H1 (cell line): ENCODE measurements at regions of chr1 and their contacts with region 1.

Region 1: DNA sequence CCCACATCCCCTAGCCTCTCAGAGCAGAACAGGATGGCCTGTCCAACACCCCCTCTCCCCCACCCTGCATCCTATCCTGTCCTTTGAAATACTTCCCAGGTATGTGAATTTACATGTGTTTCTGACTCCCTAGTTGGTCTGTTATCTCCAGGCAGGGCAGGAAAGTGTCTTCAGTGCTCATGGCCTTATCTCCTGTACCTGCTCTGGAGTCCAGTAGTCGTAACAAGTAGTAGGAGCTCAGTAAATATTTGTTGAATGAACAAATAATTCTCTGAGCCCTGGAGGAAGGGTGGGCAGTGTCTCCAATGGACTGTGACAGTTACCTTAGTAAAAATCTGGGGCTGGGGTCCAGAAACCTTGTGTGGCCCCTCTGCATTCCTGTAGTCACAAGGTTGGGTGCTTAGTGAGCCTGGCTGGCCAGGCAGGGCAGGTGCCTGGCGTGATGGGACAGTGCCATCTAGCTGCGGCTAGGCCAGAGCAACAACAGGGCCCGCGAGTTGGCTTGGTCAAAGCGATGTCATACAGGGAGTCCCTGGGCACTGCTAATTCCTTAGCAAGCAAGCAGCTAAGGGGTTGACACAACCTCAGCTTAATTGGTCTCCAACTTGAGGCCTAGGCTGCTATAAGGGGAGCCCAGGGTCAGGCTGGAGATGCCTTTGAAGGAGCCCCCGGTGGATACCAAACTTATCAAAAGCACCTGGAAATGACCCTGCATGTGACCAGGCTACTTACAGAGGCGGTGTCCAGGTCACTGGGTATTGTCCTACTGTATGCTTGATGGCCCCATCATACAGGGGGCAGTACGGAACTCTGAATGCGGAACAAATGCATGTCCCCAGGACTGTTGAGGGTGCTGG is 89.0 kb upstream of the PPM1J start:
- DNase-seq: peak in 1 of 2 experiments; percentile 80
- H3K4me3 ChIP-seq: no peak overlapping the region
- H3K27ac ChIP-seq: no peak overlapping the region
- H3K4me1 ChIP-seq: peaks cover 2 to 6% (median 4%) of the 10 kb centered on the region in 4 experiments; a peak in 5 of 7 replicates
- H3K27me3 ChIP-seq: no peaks in the 10 kb centered on the region
- CTCF ChIP-seq: peak; percentile 98 to 99 (median 98)
- EP300 ChIP-seq: no peak
- POLR2A ChIP-seq: no peak
- RAD21 ChIP-seq: peak; percentile 100

Region 2: GRCh38 chr1:112625696-112626095 is 178.4 kb before region 1 on chr1:
- CTCF ChIA-PET with region 1: no interaction called
- POLR2A ChIA-PET with region 1: no interaction called
- DNase-seq: no peak
- H3K4me3 ChIP-seq: no peak overlapping the region
- H3K27ac ChIP-seq: no peak overlapping the region
- H3K4me1 ChIP-seq: peaks cover 0 to 2% (median 0%) of the 10 kb centered on the region in 4 experiments; a peak in 1 of 7 replicates
- H3K27me3 ChIP-seq: no peaks in the 10 kb centered on the region
- CTCF ChIP-seq: no peak
- EP300 ChIP-seq: no peak
- POLR2A ChIP-seq: no peak
- RAD21 ChIP-seq: no peak

Region 3: DNA sequence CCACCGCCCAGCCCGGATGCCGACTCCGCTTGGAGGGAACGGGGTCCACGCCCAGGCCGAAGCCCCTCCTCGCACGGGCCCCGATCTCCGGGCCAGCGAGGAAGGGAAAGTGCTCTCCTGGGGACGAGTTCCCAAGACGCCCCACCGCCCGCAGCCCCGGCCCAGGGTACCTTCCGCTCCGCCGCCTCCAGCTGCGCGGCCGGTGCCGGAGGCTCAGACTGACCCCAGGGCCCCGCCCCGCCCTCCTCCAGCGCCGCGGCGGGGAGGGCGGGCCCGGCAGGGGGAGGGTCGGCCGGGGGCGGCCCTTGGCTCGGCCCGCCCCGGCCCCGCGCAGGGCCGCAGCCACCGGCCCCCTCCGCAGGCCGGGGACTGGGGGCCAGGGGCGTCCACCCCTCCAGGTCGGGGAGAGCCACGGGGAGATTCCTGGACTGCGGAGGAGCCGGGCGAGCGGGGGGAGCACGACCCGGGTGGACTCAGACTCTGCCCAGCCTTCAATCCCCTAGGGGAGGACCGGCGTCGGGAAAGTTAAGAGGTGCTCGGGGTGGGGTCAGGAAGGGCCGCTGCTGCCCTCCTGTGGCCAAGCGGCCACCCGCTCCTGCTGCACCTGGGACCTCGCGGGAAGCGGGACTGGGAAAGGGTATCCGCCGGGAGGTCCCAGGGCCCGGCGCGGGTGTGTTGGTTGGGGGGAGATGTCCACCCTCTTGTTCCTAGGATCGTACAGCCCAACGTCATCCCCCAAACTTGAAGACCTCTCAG is 97.0 kb before region 1 on chr1 and contains the start of gene RHOC:
- CTCF ChIA-PET with region 1: interaction called, 547 read pairs
- POLR2A ChIA-PET with region 1: interaction called, 3 read pairs
- DNase-seq: peak; percentile 74 to 94
- H3K4me3 ChIP-seq: peak within 1 kb of the TSS; percentile 39 to 78 (median 66)
- H3K27ac ChIP-seq: no peak within 1 kb of the TSS
- H3K4me1 ChIP-seq: peaks cover 10 to 37% (median 20%) of the 10 kb centered on the region in 4 experiments
- H3K27me3 ChIP-seq: peaks cover 0 to 10% (median 4%) of the 10 kb centered on the region in 4 experiments; a peak in 2 of 7 replicates
- CTCF ChIP-seq: peak in 2 of 3 experiments; percentile 90 to 92; a peak in 3 of 4 replicates
- EP300 ChIP-seq: peak in 1 of 2 experiments; percentile 45; a peak in 1 of 3 replicates
- POLR2A ChIP-seq: peak in 1 of 2 experiments; percentile 42; a peak in 1 of 3 replicates
- RAD21 ChIP-seq: peak; percentile 87 to 91
- total RNA-seq, gene RHOC: 53.6 and 57.6 TPM in 2 replicates

Region 4: GRCh38 chr1:112735752-112736151 is 68.4 kb before region 1 on chr1:
- CTCF ChIA-PET with region 1: interaction called, 20 read pairs
- POLR2A ChIA-PET with region 1: interaction called, 3 read pairs
- DNase-seq: no peak
- H3K4me3 ChIP-seq: no peak overlapping the region
- H3K27ac ChIP-seq: no peak overlapping the region
- H3K4me1 ChIP-seq: no peaks in the 10 kb centered on the region
- H3K27me3 ChIP-seq: no peaks in the 10 kb centered on the region; a peak in 1 of 7 replicates
- CTCF ChIP-seq: no peak
- EP300 ChIP-seq: no peak
- POLR2A ChIP-seq: no peak
- RAD21 ChIP-seq: no peak

Region 5: GRCh38 chr1:112818990-112819689 is 15.0 kb after region 1 on chr1:
- CTCF ChIA-PET with region 1: interaction called, 21 read pairs
- POLR2A ChIA-PET with region 1: interaction called, 16 read pairs
- DNase-seq: no peak
- H3K4me3 ChIP-seq: no peak overlapping the region
- H3K27ac ChIP-seq: peak overlapping the region; percentile 57
- H3K4me1 ChIP-seq: peaks cover 7 to 27% (median 21%) of the 10 kb centered on the region in 4 experiments
- H3K27me3 ChIP-seq: no peaks in the 10 kb centered on the region
- CTCF ChIP-seq: no peak
- EP300 ChIP-seq: no peak
- POLR2A ChIP-seq: no peak
- RAD21 ChIP-seq: no peak

Region 6: DNA sequence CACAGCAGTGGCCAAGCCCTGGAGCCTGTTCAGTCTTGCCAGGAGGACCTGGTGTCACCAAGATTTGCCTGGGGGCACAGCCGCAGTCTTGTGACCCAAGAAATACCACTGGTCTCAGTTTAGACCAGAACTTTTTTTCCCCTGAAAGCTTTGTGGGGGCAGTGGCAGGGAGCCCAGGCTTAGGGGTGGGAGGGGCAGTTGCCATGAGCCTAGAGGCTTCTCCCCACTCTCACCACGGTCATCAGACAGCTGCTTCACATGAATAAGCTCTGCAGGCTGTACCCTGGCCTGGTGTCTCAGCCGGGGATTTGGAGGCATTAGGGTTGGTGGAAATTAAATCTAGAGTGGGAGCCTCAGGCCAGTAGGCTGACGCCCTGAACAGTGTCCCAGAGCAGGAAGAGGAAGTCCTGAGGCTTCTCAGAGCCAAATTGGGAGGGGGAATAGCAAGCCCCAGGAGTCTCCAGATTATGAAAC is 78.2 kb after region 1 on chr1:
- CTCF ChIA-PET with region 1: interaction called, 16 read pairs
- POLR2A ChIA-PET with region 1: interaction called, 3 read pairs
- DNase-seq: no peak
- H3K4me3 ChIP-seq: no peak overlapping the region
- H3K27ac ChIP-seq: no peak overlapping the region
- H3K4me1 ChIP-seq: peaks cover 0 to 14% (median 5%) of the 10 kb centered on the region in 4 experiments; a peak in 4 of 7 replicates
- H3K27me3 ChIP-seq: no peaks in the 10 kb centered on the region
- CTCF ChIP-seq: no peak
- EP300 ChIP-seq: no peak
- POLR2A ChIP-seq: no peak
- RAD21 ChIP-seq: no peak

Region 7: DNA sequence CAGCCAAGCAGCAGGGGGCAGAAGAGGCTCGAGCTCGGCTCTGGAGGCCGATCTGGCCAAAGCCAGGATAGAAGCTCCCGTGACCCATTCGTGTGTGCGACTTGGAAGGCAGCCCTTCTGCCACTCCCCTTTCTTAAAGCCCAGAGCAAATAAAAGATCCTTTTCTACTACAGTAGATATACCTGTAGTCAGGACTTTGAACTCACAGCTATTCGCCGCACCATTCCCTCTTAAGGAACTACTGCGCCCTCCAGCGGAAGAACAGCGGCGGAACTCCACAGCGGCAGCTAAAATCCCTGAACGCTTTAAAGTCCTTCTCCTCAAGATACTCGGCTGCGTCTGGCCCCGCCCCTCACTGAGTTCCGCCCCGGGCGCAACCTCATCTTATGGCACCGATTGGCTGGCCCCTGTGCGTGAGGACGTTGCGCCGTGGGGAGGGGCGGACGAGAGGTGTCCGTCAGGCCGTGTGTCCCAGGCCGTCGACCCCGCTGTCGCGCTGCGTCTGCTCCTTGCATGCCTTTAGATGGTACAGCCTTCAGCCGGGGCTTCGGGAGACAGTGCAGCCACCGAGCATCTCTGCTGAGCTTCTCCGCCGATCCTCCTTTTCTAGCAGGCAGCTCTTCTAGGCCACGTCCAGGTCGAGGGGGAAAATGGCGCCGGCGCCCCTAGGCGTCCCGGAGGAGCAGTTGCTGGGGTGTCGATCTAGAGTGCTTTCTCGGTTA is 268.8 kb after region 1 on chr1 and contains the start of gene LRIG2:
- CTCF ChIA-PET with region 1: interaction called, 13 read pairs
- POLR2A ChIA-PET with region 1: interaction called, 9 read pairs
- DNase-seq: peak; percentile 98
- H3K4me3 ChIP-seq: peak within 1 kb of the TSS; percentile 52 to 97 (median 88)
- H3K27ac ChIP-seq: peak within 1 kb of the TSS; percentile 92
- H3K4me1 ChIP-seq: peaks cover 0 to 5% (median 2%) of the 10 kb centered on the region in 4 experiments; a peak in 4 of 7 replicates
- H3K27me3 ChIP-seq: no peaks in the 10 kb centered on the region
- CTCF ChIP-seq: peak; percentile 72 to 83 (median 76)
- EP300 ChIP-seq: no peak
- POLR2A ChIP-seq: peak; percentile 85 to 86
- RAD21 ChIP-seq: peak; percentile 75 to 80
- total RNA-seq, gene LRIG2: 20.4 and 20.9 TPM in 2 replicates